Caco-2 (cell line): ENCODE measurements at regions of chr3 and their contacts with region 1.

Region 1: GRCh38 chr3:114659109-114660061 is 365.6 kb downstream of the TIGIT start:
- DNase-seq: peak in 1 of 2 experiments; percentile 12
- H3K4me3 ChIP-seq: no peak overlapping the region
- H3K4me3 Mint-ChIP-seq: no peak overlapping the region
- H3K27ac Mint-ChIP-seq: no peak overlapping the region
- H3K4me1 ChIP-seq: peaks cover 12% of the 10 kb centered on the region; the same call in 1 of the 2 replicates
- H3K4me1 Mint-ChIP-seq: peaks cover 6% of the 10 kb centered on the region
- H3K27me3 ChIP-seq: no peaks in the 10 kb centered on the region
- H3K27me3 Mint-ChIP-seq: no peaks in the 10 kb centered on the region
- CTCF ChIP-seq: no peak

Region 2: DNA sequence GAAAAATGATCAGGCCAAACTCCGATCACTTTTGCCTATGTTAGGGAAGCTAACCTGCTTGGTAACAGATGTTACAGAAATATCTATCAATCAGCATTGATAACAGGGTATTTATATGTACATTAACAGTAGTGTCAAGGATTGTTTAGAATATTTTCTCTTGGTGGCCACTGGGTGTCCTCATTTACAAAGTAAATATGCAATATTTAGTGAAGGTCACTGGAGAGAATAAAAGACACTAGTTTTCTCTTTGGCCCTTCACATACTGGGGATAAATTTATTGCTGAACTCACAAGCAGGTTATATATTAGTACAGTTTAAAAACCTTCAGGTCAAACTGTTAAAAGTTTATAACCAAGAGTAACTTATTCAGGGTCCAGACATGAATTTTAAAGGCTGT is 296.6 kb before region 1 on chr3:
- CTCF ChIA-PET with region 1: no interaction called
- POLR2A ChIA-PET with region 1: no interaction called
- intact Hi-C with region 1: loop called (anchors 5 kb)
- DNase-seq: peak in 1 of 2 experiments; percentile 13
- H3K4me3 ChIP-seq: no peak overlapping the region
- H3K4me3 Mint-ChIP-seq: no peak overlapping the region
- H3K27ac Mint-ChIP-seq: peak overlapping the region; percentile 72
- H3K4me1 ChIP-seq: no peaks in the 10 kb centered on the region
- H3K4me1 Mint-ChIP-seq: peaks cover 11% of the 10 kb centered on the region
- H3K27me3 ChIP-seq: no peaks in the 10 kb centered on the region
- H3K27me3 Mint-ChIP-seq: no peaks in the 10 kb centered on the region
- CTCF ChIP-seq: peak; percentile 36 to 42